HAP-1 (cell line): ENCODE measurements at regions of chr13 and their contacts with region 1.

Region 1: GRCh38 chr13:94362411-94362909 is 117.0 kb downstream of the DCT start:
- DNase-seq: peak; percentile 77 to 80
- H3K4me3 ChIP-seq: no peak overlapping the region
- H3K4me1 ChIP-seq: peaks cover 2% of the 10 kb centered on the region; the same call in 1 of the 2 replicates
- H3K27me3 ChIP-seq: no peaks in the 10 kb centered on the region

Region 2: DNA sequence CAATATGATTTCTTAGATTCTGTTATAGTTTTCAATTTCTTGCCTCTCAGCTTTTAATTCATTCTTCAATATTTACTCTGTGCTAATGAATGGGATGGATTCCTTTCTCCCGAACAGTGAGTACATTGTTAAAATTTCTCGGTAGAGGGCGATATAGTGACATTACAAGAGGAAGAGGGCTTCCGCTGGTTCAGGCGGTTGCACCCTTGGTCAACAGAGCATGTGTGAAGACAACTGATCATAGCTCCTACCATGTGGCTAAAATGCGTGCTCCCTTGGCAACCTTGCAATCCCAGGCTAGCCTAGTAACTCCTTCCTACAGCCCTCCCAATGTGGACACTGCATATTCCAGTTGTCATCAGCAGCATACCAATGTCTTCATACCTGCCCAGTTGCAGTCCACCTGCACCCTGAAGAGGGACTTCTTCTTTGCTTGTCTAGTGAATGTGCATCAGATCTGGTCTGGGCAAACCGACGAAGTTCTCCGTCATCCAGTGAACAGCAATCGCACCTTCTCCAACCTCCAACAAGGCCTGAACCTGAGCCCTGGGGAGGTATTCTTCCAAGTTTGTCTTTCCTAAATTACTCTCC is 1788.9 kb before region 1 on chr13:
- in situ Hi-C with region 1: loop called (anchors 25 kb)
- DNase-seq: peak in 1 of 2 experiments; percentile 11
- H3K4me3 ChIP-seq: no peak overlapping the region
- H3K4me1 ChIP-seq: no peaks in the 10 kb centered on the region
- H3K27me3 ChIP-seq: no peaks in the 10 kb centered on the region

Region 3: GRCh38 chr13:93227878-93228642 is 1134.4 kb before region 1 on chr13:
- in situ Hi-C with region 1: loop called (anchors 25 kb)
- DNase-seq: peak; percentile 87 to 94
- H3K4me3 ChIP-seq: peak overlapping the region; percentile 76
- H3K4me1 ChIP-seq: peaks cover 36% of the 10 kb centered on the region
- H3K27me3 ChIP-seq: no peaks in the 10 kb centered on the region

Region 4: GRCh38 chr13:94050039-94050438 is 312.4 kb before region 1 on chr13:
- in situ Hi-C with region 1: no loop called
- DNase-seq: no peak
- H3K4me3 ChIP-seq: no peak overlapping the region
- H3K4me1 ChIP-seq: no peaks in the 10 kb centered on the region
- H3K27me3 ChIP-seq: no peaks in the 10 kb centered on the region